AG04450 (cell line): ENCODE measurements at regions of chr10 and their contacts with region 1.

Region 1: GRCh38 chr10:4849555-4850242 is 23.7 kb downstream of the AKR1E2 start:
- DNase-seq: peak; percentile 94
- H3K4me3 ChIP-seq: no peak overlapping the region
- H3K27ac ChIP-seq: no peak overlapping the region
- H3K27me3 ChIP-seq: no peaks in the 10 kb centered on the region
- CTCF ChIP-seq: peak; percentile 100

Region 2: DNA sequence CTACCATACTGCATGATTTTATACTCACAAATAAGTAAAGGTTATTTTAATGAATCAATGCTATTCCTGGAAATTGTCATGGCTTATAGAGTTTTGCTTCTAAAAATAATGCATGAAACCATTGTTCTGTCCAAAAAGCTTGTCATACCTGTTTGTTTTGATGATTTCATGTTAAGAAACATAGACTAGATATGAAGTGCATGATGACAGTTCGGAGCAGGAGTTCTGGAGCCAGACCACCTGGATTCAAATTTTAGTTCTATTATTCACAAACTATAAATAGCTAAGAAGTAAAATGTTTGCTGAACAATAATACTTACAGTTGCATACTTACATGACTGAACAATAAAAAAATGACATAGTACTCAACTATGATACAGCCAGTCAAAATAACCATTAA is 130.7 kb before region 1 on chr10:
- CTCF ChIA-PET with region 1: no interaction called
- POLR2A ChIA-PET with region 1: no interaction called
- DNase-seq: no peak
- H3K4me3 ChIP-seq: no peak overlapping the region
- H3K27ac ChIP-seq: no peak overlapping the region
- H3K27me3 ChIP-seq: no peaks in the 10 kb centered on the region
- CTCF ChIP-seq: no peak

Region 3: GRCh38 chr10:4825851-4826665 is 23.6 kb before region 1 on chr10 and contains the start of gene AKR1E2:
- CTCF ChIA-PET with region 1: interaction called, 20 read pairs
- POLR2A ChIA-PET with region 1: no interaction called
- DNase-seq: peak; percentile 51
- H3K4me3 ChIP-seq: peak within 1 kb of the TSS; percentile 58
- H3K27ac ChIP-seq: peak within 1 kb of the TSS; percentile 57
- H3K27me3 ChIP-seq: no peaks in the 10 kb centered on the region
- CTCF ChIP-seq: no peak
- polyA plus RNA-seq, gene AKR1E2: 1.3 and 1.4 TPM in 2 replicates

Region 4: GRCh38 chr10:4883079-4883739 is 33.5 kb after region 1 on chr10:
- CTCF ChIA-PET with region 1: interaction called, 11 read pairs
- POLR2A ChIA-PET with region 1: no interaction called
- DNase-seq: peak; percentile 48
- H3K4me3 ChIP-seq: no peak overlapping the region
- H3K27ac ChIP-seq: peak overlapping the region; percentile 70
- H3K27me3 ChIP-seq: no peaks in the 10 kb centered on the region
- CTCF ChIP-seq: no peak

Region 5: DNA sequence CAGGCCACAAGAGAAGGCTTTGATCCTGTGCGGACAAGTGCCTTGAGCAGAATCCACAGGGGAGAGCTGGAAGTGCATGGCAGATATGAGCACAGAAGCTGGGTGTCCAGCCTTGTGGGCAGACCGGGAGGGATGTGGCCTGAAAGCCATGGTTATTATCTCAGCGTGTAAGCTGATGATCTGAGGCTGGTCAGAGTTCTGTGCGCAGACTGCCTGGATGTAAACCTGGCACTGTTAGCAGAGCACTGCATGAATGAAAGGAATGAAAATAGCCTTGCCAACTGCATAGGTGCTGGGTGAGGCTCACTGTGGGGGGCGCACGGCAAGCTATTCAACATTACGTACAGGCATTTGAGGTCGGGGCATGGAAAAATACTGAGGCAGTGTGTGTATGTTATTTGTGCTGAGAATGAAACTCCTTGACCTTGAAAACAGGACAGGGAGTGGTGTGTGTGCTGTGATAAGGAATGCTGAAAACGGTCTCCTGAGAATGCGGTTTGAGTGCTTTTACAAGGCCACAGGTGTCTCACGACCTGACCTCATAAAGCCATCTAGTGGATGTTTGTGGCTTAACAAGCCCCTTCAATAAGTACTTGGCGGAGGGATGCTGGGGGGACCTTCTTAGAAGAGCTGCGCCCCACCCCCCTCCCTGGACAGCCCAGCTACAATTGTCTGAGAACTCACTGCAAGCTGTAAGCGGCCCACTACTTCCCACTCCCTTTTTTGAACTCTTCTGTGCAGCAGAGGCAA is 132.2 kb after region 1 on chr10:
- CTCF ChIA-PET with region 1: interaction called, 23 read pairs
- POLR2A ChIA-PET with region 1: interaction called, 3 read pairs
- DNase-seq: no peak
- H3K4me3 ChIP-seq: no peak overlapping the region
- H3K27ac ChIP-seq: no peak overlapping the region
- H3K27me3 ChIP-seq: no peaks in the 10 kb centered on the region
- CTCF ChIP-seq: peak; percentile 48

Region 6: DNA sequence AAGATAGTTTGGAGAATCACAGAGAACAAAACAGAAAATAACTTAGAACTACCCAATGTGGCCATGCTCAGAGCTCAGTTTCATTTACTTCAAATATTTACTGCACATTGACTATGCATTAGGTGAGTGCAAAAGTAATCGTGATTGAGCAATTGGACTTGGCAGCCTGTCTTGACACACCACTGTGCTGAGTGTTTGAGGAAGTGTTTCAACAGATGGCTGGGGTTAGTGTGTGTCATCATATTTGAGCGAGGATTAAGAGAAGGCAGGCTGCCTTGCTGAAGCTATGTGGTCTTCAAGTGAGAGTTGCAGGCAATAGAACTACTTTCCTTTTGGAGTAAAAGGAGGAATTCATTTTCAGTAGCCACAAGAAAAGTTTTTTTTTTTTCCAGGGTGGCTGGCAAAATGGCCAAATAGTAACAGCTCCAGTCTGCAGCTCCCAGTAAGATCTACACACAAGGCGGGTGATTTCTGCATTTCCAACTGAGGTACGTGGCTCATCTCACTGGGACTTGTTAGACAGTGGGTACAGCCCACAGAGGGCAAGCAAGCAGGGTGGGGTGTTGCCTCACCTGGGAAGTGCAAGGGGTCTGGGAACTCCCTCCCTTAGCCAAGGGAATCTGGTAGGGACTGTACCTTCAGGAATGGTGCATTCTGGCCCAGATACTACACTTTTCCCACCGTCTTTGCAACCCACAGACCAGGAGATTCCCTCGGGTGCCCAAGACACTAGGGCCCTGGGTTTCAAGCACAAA is 384.6 kb after region 1 on chr10:
- CTCF ChIA-PET with region 1: interaction called, 18 read pairs
- POLR2A ChIA-PET with region 1: no interaction called
- DNase-seq: peak; percentile 30
- H3K4me3 ChIP-seq: no peak overlapping the region
- H3K27ac ChIP-seq: peak overlapping the region; percentile 21
- H3K27me3 ChIP-seq: peaks cover 2% of the 10 kb centered on the region
- CTCF ChIP-seq: no peak

Region 7: GRCh38 chr10:5423771-5424170 is 574.1 kb after region 1 on chr10:
- CTCF ChIA-PET with region 1: interaction called, 14 read pairs
- POLR2A ChIA-PET with region 1: interaction called, 4 read pairs
- DNase-seq: no peak
- H3K4me3 ChIP-seq: no peak overlapping the region
- H3K27ac ChIP-seq: no peak overlapping the region
- H3K27me3 ChIP-seq: no peaks in the 10 kb centered on the region
- CTCF ChIP-seq: no peak